Pancreas (tissue), 10 donors: ENCODE measurements at regions of chr20 and their contacts with region 1.

Region 1: DNA sequence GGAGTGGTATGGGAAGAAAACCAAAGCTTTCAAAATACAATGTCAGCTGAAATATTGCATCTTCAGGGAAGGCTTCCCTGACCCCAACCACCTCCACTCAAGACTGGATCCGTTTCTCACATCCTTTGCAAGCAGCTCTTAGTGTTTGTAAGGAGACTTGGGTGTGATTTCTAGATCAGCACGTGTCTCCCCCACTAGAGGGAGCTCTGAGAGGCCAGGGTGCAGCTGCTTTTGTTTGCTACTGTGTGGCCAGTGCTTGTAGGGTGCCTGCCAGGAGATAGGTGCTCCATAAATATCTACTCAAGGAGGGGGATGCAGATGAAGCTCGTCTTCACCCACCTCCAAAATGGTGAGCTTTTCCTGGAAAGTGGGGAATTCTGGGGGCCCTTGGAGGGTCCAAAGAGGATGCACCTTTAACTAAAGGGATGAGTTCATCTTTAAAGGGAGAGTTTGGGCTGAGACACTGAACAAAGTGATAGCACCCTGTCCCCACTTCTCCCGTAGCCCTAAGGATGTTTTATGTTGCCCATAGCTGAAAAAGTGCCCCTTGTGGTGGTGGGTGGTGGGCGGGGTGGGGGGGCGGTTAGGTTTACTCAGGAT is 52.6 kb upstream of the MAFB start:
- DNase-seq: peak in 2 of 6 donors; percentile 14 to 38
- ATAC-seq: peak in 2 of 4 donors; percentile 54 to 64
- H3K4me3 ChIP-seq: no peak overlapping the region
- H3K27ac ChIP-seq: no peak overlapping the region
- H3K4me1 ChIP-seq: no peaks in the 10 kb centered on the region
- H3K27me3 ChIP-seq: no peaks in the 10 kb centered on the region
- CTCF ChIP-seq: peak; percentile 27 to 45 (median 38)

Region 2: GRCh38 chr20:40806929-40807820 is 65.6 kb after region 1 on chr20:
- intact Hi-C with region 1: no loop called
- DNase-seq: no peak
- ATAC-seq: peak in 1 of 4 donors; percentile 31
- H3K4me3 ChIP-seq: no peak overlapping the region
- H3K27ac ChIP-seq: no peak overlapping the region
- H3K4me1 ChIP-seq: no peaks in the 10 kb centered on the region
- H3K27me3 ChIP-seq: no peaks in the 10 kb centered on the region
- CTCF ChIP-seq: no peak

Region 3: GRCh38 chr20:40945754-40946450 is 204.3 kb after region 1 on chr20:
- intact Hi-C with region 1: loop called in 1 of 3 experiments (anchors 10 kb)
- DNase-seq: peak in 1 of 6 donors; percentile 24
- ATAC-seq: peak in 3 of 4 donors; percentile 67 to 80 (median 77)
- H3K4me3 ChIP-seq: no peak overlapping the region
- H3K27ac ChIP-seq: no peak overlapping the region
- H3K4me1 ChIP-seq: no peaks in the 10 kb centered on the region
- H3K27me3 ChIP-seq: no peaks in the 10 kb centered on the region
- CTCF ChIP-seq: peak in 1 of 4 donors; percentile 12